ENCODE measurements at regions of chr10 and their contacts with region 1.

Region 1: GRCh38 chr10:132637477-132638129 is 100.0 kb downstream of the INPP5A start:
- DNase-seq: peak; percentile 79
- ATAC-seq: peak; percentile 55
- H3K4me3 ChIP-seq: no peak overlapping the region
- H3K4me3 Mint-ChIP-seq: peak overlapping the region; percentile 37
- H3K27ac ChIP-seq: no peak overlapping the region
- H3K27ac Mint-ChIP-seq: peak overlapping the region; percentile 64
- H3K4me1 ChIP-seq: peaks cover 29 to 30% of the 10 kb centered on the region in 2 donors
- H3K4me1 Mint-ChIP-seq: peaks cover 36% of the 10 kb centered on the region
- H3K27me3 ChIP-seq: no peaks in the 10 kb centered on the region
- H3K27me3 Mint-ChIP-seq: no peaks in the 10 kb centered on the region
- CTCF ChIP-seq: peak; percentile 75

Region 2: DNA sequence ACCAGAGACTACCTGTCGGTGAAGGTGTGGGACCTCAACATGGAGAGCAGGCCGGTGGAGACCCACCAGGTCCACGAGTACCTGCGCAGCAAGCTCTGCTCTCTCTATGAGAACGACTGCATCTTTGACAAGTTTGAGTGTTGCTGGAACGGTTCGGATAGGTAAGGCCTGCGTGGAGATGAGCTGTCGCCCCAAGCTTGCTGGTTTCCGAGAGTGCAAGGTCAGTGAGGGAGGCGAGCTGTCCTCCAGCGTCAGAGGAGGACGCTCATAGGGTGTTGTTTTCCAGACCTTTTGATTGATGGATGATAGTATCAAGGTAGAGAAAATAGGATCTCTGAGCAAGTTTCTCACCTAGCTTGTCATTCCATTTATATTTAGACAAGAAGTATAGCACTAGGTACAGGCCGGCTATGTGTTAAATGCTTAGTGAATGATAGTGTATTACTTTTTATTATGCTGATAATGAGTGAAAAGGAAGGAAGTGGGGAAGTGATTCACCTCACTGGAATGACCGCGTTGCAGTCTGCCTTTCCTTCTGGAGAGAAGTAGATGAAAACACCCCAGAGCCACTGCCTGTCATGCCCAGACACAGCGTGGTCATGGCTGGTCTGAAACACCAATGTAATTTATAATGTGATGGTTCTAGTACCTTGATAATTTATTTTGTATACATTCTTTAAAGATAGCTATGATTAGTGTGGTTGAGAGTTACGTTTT is 689.8 kb before region 1 on chr10:
- CTCF ChIA-PET with region 1: no interaction called
- POLR2A ChIA-PET with region 1: no interaction called
- intact Hi-C with region 1: no loop called
- DNase-seq: no peak
- ATAC-seq: no peak
- H3K4me3 ChIP-seq: no peak overlapping the region
- H3K4me3 Mint-ChIP-seq: no peak overlapping the region
- H3K27ac ChIP-seq: no peak overlapping the region
- H3K27ac Mint-ChIP-seq: no peak overlapping the region
- H3K4me1 ChIP-seq: no peaks in the 10 kb centered on the region
- H3K4me1 Mint-ChIP-seq: peaks cover 1% of the 10 kb centered on the region
- H3K27me3 ChIP-seq: no peaks in the 10 kb centered on the region
- H3K27me3 Mint-ChIP-seq: no peaks in the 10 kb centered on the region
- CTCF ChIP-seq: no peak

Region 3: DNA sequence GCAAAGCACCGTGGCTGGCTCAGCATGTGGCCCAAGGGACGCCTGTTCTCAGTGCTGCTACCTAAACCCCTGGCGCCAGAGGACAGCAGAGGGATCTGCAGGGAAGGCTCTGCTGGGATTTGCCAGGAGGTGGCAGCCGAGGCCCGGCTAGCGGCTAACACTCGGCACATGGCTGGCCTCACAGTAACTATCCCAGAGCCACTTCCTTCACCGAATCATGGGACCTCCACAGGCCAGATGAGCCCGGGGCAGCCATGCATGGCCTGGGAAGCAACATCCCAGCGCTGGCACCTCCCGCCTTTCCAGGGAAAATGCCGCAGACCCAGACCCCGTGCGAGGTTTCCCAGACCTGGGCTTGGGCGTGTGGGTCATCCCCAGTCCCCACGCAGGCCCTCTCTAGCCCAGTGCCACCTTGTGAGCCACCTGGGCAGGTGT is 414.4 kb before region 1 on chr10:
- CTCF ChIA-PET with region 1: no interaction called
- POLR2A ChIA-PET with region 1: no interaction called
- intact Hi-C with region 1: loop called (anchors 1 kb)
- DNase-seq: peak; percentile 72
- ATAC-seq: peak; percentile 86
- H3K4me3 ChIP-seq: no peak overlapping the region
- H3K4me3 Mint-ChIP-seq: no peak overlapping the region
- H3K27ac ChIP-seq: no peak overlapping the region
- H3K27ac Mint-ChIP-seq: no peak overlapping the region
- H3K4me1 ChIP-seq: peaks cover 0 to 9% of the 10 kb centered on the region in 2 donors
- H3K4me1 Mint-ChIP-seq: peaks cover 5% of the 10 kb centered on the region
- H3K27me3 ChIP-seq: no peaks in the 10 kb centered on the region
- H3K27me3 Mint-ChIP-seq: no peaks in the 10 kb centered on the region
- CTCF ChIP-seq: peak; percentile 68

Region 4: DNA sequence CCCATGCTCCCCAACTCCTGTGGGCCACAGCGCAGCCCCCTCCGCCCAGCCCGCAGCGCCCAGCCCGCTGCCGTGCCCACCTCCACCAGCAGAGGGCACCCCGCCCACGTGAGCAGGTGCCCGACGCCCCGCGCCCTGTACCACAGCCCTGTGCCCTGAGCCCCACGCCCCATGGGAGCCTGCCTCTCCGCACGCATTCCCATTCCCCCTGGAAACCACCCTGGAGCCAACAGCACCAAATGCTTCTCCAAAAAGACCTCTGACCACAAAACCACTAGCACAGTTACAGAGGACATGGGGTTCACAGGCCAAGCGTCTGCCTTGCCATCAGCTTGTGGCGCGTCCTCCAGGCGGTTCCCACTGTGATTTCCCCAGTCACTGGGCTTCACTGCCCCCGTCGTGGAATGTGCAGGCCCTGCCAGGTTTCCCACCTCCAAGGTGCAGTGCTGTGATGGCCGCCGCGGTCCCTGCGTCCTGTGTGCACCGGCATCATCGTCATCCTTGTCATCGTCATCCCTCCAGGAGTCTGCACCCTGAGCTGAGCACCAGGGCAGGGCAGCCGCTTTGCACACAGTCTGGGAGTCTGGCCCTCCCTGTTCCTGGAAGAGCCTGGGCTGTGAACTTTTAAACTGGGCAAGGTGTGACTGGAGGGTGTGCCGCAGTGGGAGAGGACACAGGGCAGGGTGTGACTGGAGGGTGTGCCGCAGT is 178.9 kb before region 1 on chr10:
- CTCF ChIA-PET with region 1: interaction called, 59 read pairs
- POLR2A ChIA-PET with region 1: no interaction called
- intact Hi-C with region 1: no loop called
- DNase-seq: peak; percentile 82
- ATAC-seq: peak; percentile 92
- H3K4me3 ChIP-seq: no peak overlapping the region
- H3K4me3 Mint-ChIP-seq: no peak overlapping the region
- H3K27ac ChIP-seq: no peak overlapping the region
- H3K27ac Mint-ChIP-seq: no peak overlapping the region
- H3K4me1 ChIP-seq: peaks cover 4% of the 10 kb centered on the region in 2 donors
- H3K4me1 Mint-ChIP-seq: peaks cover 2% of the 10 kb centered on the region
- H3K27me3 ChIP-seq: peaks cover 0 to 5% (median 0%) of the 10 kb centered on the region in 4 experiments
- H3K27me3 Mint-ChIP-seq: no peaks in the 10 kb centered on the region
- CTCF ChIP-seq: peak; percentile 90

Region 5: DNA sequence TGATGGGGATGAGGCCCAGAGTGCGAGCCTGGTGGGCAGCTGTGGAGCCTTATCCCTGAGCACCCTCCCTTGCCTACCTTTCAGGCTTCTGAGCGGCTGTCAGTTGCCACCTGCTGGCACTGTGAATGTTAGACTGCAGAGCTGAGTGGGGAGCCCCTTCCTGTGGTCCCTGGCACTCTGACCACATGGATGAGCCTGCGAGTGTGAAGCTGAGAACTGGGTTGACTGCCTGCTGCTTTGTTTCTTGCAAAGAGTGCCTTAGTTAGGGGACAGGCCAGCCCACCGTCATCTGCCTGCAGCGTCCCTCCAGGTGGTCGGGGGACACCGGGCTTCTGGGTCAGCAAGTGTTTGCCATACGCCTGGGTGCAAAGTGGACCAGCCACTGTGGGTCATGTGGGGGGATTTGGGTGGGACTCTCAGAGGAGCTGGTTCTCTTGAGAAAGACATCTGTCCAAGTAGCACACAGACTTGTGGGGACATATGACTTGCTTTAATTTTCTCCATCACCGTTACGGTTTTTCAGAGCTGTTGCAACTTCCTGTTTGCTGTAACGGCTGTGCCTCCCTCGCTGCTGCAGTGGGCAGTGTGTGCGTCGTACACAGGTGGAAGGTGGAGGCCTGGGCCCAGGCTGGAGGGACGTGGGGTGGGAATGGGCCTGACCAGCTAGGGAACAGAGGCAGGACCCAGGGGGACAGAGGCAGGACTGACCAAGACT is 86.4 kb before region 1 on chr10:
- CTCF ChIA-PET with region 1: no interaction called
- POLR2A ChIA-PET with region 1: no interaction called
- intact Hi-C with region 1: loop called (anchors 5 kb)
- DNase-seq: peak; percentile 80
- ATAC-seq: peak; percentile 14
- H3K4me3 ChIP-seq: peak overlapping the region in 4 of 5 experiments; percentile 29 to 51 (median 41)
- H3K4me3 Mint-ChIP-seq: peak overlapping the region; percentile 85
- H3K27ac ChIP-seq: peak overlapping the region; percentile 87 to 88
- H3K27ac Mint-ChIP-seq: peak overlapping the region; percentile 96
- H3K4me1 ChIP-seq: peaks cover 76 to 82% of the 10 kb centered on the region in 2 donors
- H3K4me1 Mint-ChIP-seq: peaks cover 54% of the 10 kb centered on the region
- H3K27me3 ChIP-seq: no peaks in the 10 kb centered on the region
- H3K27me3 Mint-ChIP-seq: no peaks in the 10 kb centered on the region
- CTCF ChIP-seq: no peak

Region 6: DNA sequence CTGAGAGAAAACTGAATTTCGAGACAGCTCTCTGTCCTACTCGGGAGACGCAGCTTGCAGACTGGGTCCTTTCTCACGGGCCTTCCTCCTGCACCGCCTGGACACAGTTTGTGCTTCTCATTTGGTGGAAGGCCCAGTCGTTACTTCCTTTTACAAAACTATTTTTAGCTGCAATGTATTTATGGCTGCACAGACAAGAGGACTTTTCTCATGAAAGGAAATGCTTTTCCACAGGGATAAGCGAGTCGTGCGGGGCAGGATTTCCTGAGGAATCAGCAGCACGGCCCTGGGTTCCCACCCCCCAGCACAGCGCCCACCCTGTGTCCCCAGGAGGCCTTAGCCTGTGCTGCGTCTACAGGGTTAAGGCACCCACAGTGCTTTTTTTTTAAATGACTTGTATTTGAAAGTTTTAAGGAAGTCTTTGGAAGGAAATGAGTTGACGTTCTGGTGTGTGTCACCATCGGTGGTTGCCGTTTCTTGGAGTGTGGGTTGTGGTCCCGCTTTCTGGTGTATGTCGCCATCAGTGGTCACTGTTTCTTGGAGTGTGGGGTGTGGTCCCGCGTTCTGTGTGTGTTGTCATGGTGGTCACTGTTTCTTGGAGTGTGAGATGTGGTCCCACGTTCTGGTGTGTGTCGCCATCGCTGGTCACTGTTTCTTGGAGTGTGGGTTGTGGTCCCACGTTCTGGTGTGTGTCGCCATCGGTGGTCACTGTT is 49.1 kb before region 1 on chr10:
- CTCF ChIA-PET with region 1: interaction called, 3 read pairs
- POLR2A ChIA-PET with region 1: no interaction called
- intact Hi-C with region 1: loop called (anchors 5 kb)
- DNase-seq: peak; percentile 80
- ATAC-seq: peak; percentile 62
- H3K4me3 ChIP-seq: peak overlapping the region in 4 of 5 experiments; percentile 18 to 47 (median 36)
- H3K4me3 Mint-ChIP-seq: peak overlapping the region; percentile 89
- H3K27ac ChIP-seq: peak overlapping the region; percentile 82 to 86
- H3K27ac Mint-ChIP-seq: peak overlapping the region; percentile 95
- H3K4me1 ChIP-seq: peaks cover 57 to 71% of the 10 kb centered on the region in 2 donors
- H3K4me1 Mint-ChIP-seq: peaks cover 82% of the 10 kb centered on the region
- H3K27me3 ChIP-seq: no peaks in the 10 kb centered on the region
- H3K27me3 Mint-ChIP-seq: no peaks in the 10 kb centered on the region
- CTCF ChIP-seq: no peak